GM12878 (cell line): ENCODE measurements at regions of chr5 and their contacts with region 1.

Region 1: GRCh38 chr5:91499943-91500531 is 116.9 kb upstream of the ARRDC3 start:
- DNase-seq: no peak
- ATAC-seq: peak; percentile 76
- H3K4me3 ChIP-seq: no peak overlapping the region
- H3K27ac ChIP-seq: no peak overlapping the region
- H3K4me1 ChIP-seq: no peaks in the 10 kb centered on the region
- H3K27me3 ChIP-seq: no peaks in the 10 kb centered on the region
- CTCF ChIP-seq: peak; percentile 29 to 60 (median 59); a peak in 5 of 6 replicates
- EP300 ChIP-seq: no peak
- POLR2A ChIP-seq: no peak
- RAD21 ChIP-seq: peak; percentile 61

Region 2: DNA sequence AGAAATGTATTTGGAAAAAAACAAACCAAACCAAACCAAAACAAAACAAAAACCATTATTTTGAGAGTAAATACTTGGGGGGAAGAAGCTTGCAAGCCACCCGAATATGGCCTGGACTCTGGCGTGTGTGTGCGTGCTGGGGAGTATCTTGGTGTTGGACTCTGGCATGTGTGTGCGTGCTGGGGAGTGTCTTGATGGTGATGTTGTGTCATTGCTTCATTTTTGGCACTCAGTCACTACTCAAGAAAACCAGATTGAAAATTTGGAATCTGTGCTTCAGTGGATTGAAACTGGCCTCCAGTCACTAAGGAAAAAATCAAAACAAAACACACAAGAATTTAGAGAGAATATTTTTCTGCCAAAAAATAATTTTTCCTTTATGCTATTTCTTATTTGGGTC is 193.0 kb before region 1 on chr5:
- CTCF ChIA-PET with region 1: no interaction called
- POLR2A ChIA-PET with region 1: no interaction called
- RAD21 ChIA-PET with region 1: no interaction called
- SMC1A ChIA-PET with region 1: no interaction called
- in situ Hi-C with region 1: no loop called
- intact Hi-C with region 1: no loop called
- DNase-seq: no peak
- ATAC-seq: no peak
- H3K4me3 ChIP-seq: no peak overlapping the region
- H3K27ac ChIP-seq: no peak overlapping the region
- H3K4me1 ChIP-seq: peaks cover 11% of the 10 kb centered on the region
- H3K27me3 ChIP-seq: no peaks in the 10 kb centered on the region
- CTCF ChIP-seq: no peak
- EP300 ChIP-seq: no peak
- POLR2A ChIP-seq: no peak
- RAD21 ChIP-seq: no peak

Region 3: GRCh38 chr5:91514400-91514799 is 14.4 kb after region 1 on chr5:
- CTCF ChIA-PET with region 1: interaction called, 12 read pairs
- POLR2A ChIA-PET with region 1: no interaction called
- RAD21 ChIA-PET with region 1: no interaction called
- SMC1A ChIA-PET with region 1: interaction called, 3 read pairs
- in situ Hi-C with region 1: no loop called
- intact Hi-C with region 1: no loop called
- DNase-seq: no peak
- ATAC-seq: no peak
- H3K4me3 ChIP-seq: no peak overlapping the region
- H3K27ac ChIP-seq: no peak overlapping the region
- H3K4me1 ChIP-seq: no peaks in the 10 kb centered on the region
- H3K27me3 ChIP-seq: no peaks in the 10 kb centered on the region
- CTCF ChIP-seq: no peak
- EP300 ChIP-seq: no peak
- POLR2A ChIP-seq: no peak
- RAD21 ChIP-seq: no peak

Region 4: GRCh38 chr5:91641730-91642350 is 141.8 kb after region 1 on chr5:
- CTCF ChIA-PET with region 1: interaction called, 17 read pairs
- POLR2A ChIA-PET with region 1: no interaction called
- RAD21 ChIA-PET with region 1: no interaction called
- SMC1A ChIA-PET with region 1: interaction called, 6 read pairs
- in situ Hi-C with region 1: no loop called
- intact Hi-C with region 1: loop called (anchors 5 kb)
- DNase-seq: no peak
- ATAC-seq: peak; percentile 54
- H3K4me3 ChIP-seq: no peak overlapping the region
- H3K27ac ChIP-seq: no peak overlapping the region
- H3K4me1 ChIP-seq: no peaks in the 10 kb centered on the region
- H3K27me3 ChIP-seq: no peaks in the 10 kb centered on the region
- CTCF ChIP-seq: peak; percentile 36 to 51 (median 40); a peak in 4 of 6 replicates
- EP300 ChIP-seq: no peak
- POLR2A ChIP-seq: no peak
- RAD21 ChIP-seq: 0 out of 2 replicates have a peak, but pooled peaks have one; percentile 28

Region 5: DNA sequence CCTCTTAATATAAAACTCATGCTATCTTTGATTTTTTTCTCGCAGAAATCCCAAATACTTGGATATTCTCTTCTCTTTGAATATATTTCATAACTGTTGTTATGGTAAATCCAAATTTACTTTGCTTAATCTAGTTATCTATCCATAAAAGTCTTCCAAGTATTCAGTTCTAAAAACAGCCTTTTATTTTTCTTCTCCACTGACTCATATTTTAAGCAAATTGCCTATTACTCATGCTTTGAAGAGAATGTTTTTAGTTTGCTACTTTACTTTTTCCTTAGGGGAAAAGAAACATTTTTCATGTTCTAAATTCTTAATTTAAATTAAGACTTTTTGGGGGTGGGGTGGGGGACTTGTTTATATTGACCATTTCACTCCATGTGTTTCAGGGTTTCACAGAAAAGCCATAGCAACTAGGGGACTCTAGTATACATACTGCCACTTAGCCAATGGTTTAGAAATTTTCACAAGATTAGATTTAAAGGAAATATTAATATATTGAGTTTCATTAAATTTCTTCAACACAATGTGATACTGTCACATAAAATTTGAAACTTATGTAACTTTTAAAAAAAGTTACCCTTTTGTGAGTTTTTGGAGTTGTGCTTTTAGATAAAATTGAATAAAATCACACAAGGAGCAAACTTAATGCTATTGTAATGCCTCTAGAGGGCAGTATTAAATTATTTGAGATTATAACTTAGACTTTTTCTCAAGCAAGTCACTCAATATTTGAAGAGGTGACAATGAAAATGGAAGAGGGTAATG is 428.9 kb after region 1 on chr5:
- CTCF ChIA-PET with region 1: no interaction called
- POLR2A ChIA-PET with region 1: no interaction called
- RAD21 ChIA-PET with region 1: no interaction called
- SMC1A ChIA-PET with region 1: no interaction called
- in situ Hi-C with region 1: no loop called
- intact Hi-C with region 1: loop called (anchors 10 kb)
- DNase-seq: no peak
- ATAC-seq: peak; percentile 62; the same call in 2 of the 3 replicates
- H3K4me3 ChIP-seq: no peak overlapping the region
- H3K27ac ChIP-seq: no peak overlapping the region
- H3K4me1 ChIP-seq: no peaks in the 10 kb centered on the region
- H3K27me3 ChIP-seq: no peaks in the 10 kb centered on the region
- CTCF ChIP-seq: peak in 2 of 3 experiments; percentile 29 to 38; a peak in 4 of 6 replicates
- EP300 ChIP-seq: no peak
- POLR2A ChIP-seq: no peak
- RAD21 ChIP-seq: peak; percentile 26; the same call in 1 of the 2 replicates